Naive thymus-derived CD4-positive, alpha-beta T cell (primary cell): ENCODE measurements at regions of chr4 and their contacts with region 1.

Region 1: DNA sequence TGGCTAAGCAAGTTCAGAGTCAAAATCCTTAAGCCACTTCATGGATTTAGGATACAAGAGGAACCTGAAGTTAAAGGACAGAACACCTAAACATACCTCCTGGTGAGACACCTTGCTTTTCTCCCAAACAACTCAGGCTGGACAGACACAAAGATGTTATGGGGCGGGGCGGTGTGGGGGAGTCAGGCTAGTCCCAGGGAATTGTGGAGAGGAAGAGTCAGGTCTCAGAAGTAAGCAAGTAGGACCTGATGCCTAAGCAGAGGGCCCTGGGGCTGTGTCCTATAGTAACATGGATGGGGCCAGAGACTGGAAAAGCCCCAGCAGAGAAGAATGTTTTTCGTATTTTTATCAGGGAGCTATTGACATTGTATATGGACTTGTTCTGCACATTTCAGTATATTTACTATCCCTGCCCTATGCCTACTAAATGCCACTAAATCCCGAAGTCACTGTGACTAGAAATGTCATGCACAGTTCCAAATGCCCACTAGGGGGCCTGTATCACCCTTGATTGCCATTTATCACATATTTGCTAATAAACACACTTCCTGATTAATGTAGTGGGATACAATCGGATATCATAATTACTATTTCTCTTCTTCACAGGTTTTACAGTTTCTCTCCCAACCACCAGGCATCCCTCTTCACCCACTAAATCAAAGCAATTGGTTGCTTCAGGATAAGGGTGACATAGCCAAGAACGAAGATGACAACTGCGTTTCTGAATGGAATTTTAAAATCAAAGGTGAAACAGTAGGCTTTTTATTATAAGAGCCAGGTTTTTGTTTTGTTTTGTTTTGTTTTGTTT is 23.8 kb upstream of the ARHGAP10 start:
- DNase-seq: peak in 7 of 9 donors; percentile 26 to 52 (median 44)
- ATAC-seq: peak; percentile 80
- H3K4me3 ChIP-seq: no peak overlapping the region
- H3K4me3 Mint-ChIP-seq: no peak overlapping the region
- H3K27ac ChIP-seq: no peak overlapping the region
- H3K27ac Mint-ChIP-seq: no peak overlapping the region
- H3K4me1 ChIP-seq: no peaks in the 10 kb centered on the region
- H3K4me1 Mint-ChIP-seq: peaks cover 0 to 8% (median 0%) of the 10 kb centered on the region in 7 donors
- H3K27me3 ChIP-seq: no peaks in the 10 kb centered on the region
- H3K27me3 Mint-ChIP-seq: peaks cover 0 to 14% (median 0%) of the 10 kb centered on the region in 5 donors

Region 2: DNA sequence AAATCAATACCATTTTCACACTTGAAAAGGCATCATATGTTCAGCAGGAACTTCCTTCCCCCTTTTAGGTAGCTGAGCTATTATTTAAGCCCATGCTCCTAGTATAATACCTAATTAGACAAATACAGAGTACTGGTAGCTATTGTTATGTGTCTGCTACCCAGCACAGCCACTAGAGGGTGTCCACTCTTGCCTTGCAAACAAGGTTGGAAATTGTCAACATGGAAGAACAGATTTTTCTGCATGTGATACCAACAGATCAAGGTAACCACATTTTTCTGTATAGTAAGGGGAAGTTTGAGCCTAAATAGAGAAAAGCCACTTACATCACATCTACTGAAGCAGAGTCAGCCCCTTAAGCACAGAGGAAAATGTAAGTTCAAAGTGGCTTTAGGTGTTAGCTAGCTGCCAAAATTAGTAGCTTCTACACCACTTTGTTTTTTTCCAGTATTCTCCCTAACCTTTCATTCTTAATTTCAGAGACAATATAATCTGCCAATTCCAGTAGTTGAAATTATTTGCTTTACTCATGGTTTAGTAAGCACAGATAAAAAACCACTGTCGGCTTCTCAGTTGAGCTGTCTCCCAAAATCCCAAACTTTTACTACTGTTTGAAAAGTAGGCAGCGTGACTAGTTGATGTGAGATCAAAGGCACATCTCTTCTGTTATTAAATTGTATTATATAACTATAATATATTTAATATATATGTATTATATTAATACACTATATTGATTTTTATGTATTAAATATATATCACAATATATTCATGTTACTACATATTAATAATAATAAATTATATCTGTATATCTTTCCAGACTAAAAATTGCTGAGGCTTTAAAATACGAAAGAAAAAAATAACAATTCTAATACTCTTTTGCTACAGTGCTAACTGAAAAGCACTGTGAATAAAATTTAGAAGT is 189.0 kb before region 1 on chr4:
- CTCF ChIA-PET with region 1: no interaction called
- POLR2A ChIA-PET with region 1: no interaction called
- intact Hi-C with region 1: loop called (anchors 5 kb)
- DNase-seq: peak in 7 of 9 donors; percentile 1 to 40 (median 27)
- ATAC-seq: peak; percentile 80
- H3K4me3 ChIP-seq: no peak overlapping the region
- H3K4me3 Mint-ChIP-seq: no peak overlapping the region
- H3K27ac ChIP-seq: no peak overlapping the region
- H3K27ac Mint-ChIP-seq: peak overlapping the region in 1 of 9 donors; percentile 23
- H3K4me1 ChIP-seq: no peaks in the 10 kb centered on the region
- H3K4me1 Mint-ChIP-seq: no peaks in the 10 kb centered on the region
- H3K27me3 ChIP-seq: no peaks in the 10 kb centered on the region
- H3K27me3 Mint-ChIP-seq: peaks cover 4 to 11% (median 7%) of the 10 kb centered on the region in 5 donors

Region 3: DNA sequence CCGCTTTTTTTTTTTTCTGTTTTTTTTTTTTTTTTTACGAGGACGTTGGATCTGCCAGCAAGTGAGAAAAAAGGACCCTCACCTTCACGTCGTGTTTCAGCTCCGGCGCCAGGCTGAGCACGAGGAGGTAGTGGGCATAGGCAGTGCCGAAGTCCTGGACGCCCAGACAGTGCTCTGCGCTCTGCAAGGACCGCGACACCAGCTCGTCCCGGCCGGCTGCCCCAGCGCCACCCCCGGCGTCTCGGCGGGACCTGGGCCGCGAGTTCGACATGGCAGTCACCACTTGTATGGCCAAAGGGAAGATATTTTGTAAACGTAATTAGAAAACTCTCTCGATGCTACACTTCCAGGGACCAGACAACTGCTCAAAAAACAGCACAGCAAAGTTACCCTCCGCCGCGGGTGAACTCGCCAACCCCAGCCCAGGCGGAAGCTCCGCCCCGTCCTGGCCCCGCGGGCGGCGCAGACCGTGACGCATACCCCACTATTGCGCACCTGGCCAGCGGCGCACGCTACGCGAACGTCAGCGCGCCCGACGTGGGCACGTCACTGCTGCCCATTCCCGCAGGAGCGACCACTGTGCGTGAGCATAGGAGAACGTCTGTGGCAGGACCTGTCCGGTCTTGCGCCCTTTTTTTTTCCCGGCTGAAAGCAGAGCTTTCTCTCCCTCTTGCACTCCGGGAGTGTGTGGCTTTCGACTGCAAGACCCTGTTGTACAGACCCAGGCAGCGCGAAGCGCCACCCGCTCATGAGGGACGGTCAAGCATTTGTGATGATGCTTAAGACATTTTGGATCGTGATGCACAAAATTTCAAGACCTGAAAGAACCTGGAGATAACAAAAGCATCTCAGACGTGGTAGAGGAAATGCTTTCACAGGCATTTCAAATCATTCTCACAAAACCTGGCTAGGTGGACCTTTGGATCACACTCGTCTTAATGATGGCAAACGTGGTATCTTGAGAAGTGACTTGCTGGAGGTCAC is 24.1 kb before region 1 on chr4 and contains the start of gene PRMT9:
- CTCF ChIA-PET with region 1: interaction called, 3 read pairs
- POLR2A ChIA-PET with region 1: interaction called, 4 read pairs
- intact Hi-C with region 1: loop called in 1 of 2 experiments (anchors 1 kb)
- DNase-seq: peak; percentile 79 to 90 (median 85)
- ATAC-seq: peak; percentile 98
- H3K4me3 ChIP-seq: peak within 1 kb of the TSS; percentile 97
- H3K4me3 Mint-ChIP-seq: peak within 1 kb of the TSS; percentile 89 to 100 (median 97)
- H3K27ac ChIP-seq: peak within 1 kb of the TSS; percentile 95
- H3K27ac Mint-ChIP-seq: peak within 1 kb of the TSS; percentile 86 to 99 (median 97)
- H3K4me1 ChIP-seq: peaks cover 4 to 16% of the 10 kb centered on the region in 2 donors
- H3K4me1 Mint-ChIP-seq: peaks cover 15 to 47% (median 38%) of the 10 kb centered on the region in 7 donors
- H3K27me3 ChIP-seq: no peaks in the 10 kb centered on the region
- H3K27me3 Mint-ChIP-seq: peaks cover 0 to 11% (median 2%) of the 10 kb centered on the region in 5 donors
- total RNA-seq, gene PRMT9: 9.7 to 15.9 (median 10.8) TPM

Region 4: GRCh38 chr4:147696863-147697262 is 11.2 kb before region 1 on chr4:
- CTCF ChIA-PET with region 1: interaction called, 11 read pairs
- POLR2A ChIA-PET with region 1: no interaction called
- intact Hi-C with region 1: no loop called
- DNase-seq: no peak
- ATAC-seq: no peak
- H3K4me3 ChIP-seq: no peak overlapping the region
- H3K4me3 Mint-ChIP-seq: no peak overlapping the region
- H3K27ac ChIP-seq: no peak overlapping the region
- H3K27ac Mint-ChIP-seq: no peak overlapping the region
- H3K4me1 ChIP-seq: no peaks in the 10 kb centered on the region
- H3K4me1 Mint-ChIP-seq: no peaks in the 10 kb centered on the region
- H3K27me3 ChIP-seq: no peaks in the 10 kb centered on the region
- H3K27me3 Mint-ChIP-seq: peaks cover 6 to 33% (median 23%) of the 10 kb centered on the region in 5 donors

Region 5: GRCh38 chr4:147731580-147732517 is 23.8 kb after region 1 on chr4 and contains the start of gene ARHGAP10:
- CTCF ChIA-PET with region 1: interaction called, 4 read pairs
- POLR2A ChIA-PET with region 1: no interaction called
- intact Hi-C with region 1: loop called (anchors 1 to 2 kb)
- DNase-seq: peak; percentile 34 to 74 (median 54)
- ATAC-seq: peak; percentile 79
- H3K4me3 ChIP-seq: peak within 1 kb of the TSS; percentile 76
- H3K4me3 Mint-ChIP-seq: peak within 1 kb of the TSS; percentile 89 to 97 (median 92)
- H3K27ac ChIP-seq: peak within 1 kb of the TSS; percentile 63
- H3K27ac Mint-ChIP-seq: peak within 1 kb of the TSS; percentile 75 to 93 (median 88)
- H3K4me1 ChIP-seq: peaks cover 14 to 15% of the 10 kb centered on the region in 2 donors
- H3K4me1 Mint-ChIP-seq: peaks cover 13 to 42% (median 24%) of the 10 kb centered on the region in 7 donors
- H3K27me3 ChIP-seq: no peaks in the 10 kb centered on the region
- H3K27me3 Mint-ChIP-seq: peaks cover 0 to 41% (median 0%) of the 10 kb centered on the region in 5 donors
- total RNA-seq, gene ARHGAP10: 2.9 to 8.5 (median 3.2) TPM